ENCODE measurements at regions of chr6 and their contacts with region 1.

Region 1: GRCh38 chr6:132279592-132280139 is 121.6 kb downstream of the MOXD1 start:
- H3K4me3 Mint-ChIP-seq: peak overlapping the region; percentile 78
- H3K27ac Mint-ChIP-seq: no peak overlapping the region
- H3K4me1 Mint-ChIP-seq: no peaks in the 10 kb centered on the region
- H3K27me3 Mint-ChIP-seq: peaks cover 21% of the 10 kb centered on the region

Region 2: DNA sequence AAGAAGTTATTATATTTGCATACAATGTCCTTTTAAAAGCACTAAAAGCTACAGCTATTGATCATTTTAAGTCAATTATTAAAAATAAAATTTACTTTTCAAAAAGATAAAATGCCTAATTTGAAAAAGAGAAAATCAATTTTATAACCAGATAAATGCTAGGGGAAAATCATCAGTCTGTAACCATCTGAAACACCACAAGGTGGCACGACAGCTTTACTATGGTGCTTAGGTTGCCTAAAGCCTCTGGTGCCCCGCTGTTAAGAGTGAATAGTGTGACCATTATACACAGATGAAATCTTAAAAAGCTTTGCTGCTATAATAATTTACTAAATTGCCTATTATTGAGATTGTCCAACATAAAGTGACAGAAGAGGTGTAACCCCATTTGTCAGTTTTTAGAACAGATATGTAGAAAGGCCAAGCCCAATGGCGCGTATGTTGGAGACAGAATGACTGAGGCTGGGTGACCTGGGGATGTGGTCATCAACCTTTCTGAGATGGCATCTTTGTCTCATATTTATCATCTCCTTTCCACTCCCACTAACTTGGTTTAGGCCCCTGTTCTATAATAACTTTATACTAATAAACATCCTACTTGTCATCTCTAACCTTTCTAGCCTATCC is 20.8 kb after region 1 on chr6:
- intact Hi-C with region 1: loop called (anchors 1 kb)
- H3K4me3 Mint-ChIP-seq: no peak overlapping the region
- H3K27ac Mint-ChIP-seq: no peak overlapping the region
- H3K4me1 Mint-ChIP-seq: peaks cover 6% of the 10 kb centered on the region
- H3K27me3 Mint-ChIP-seq: peaks cover 3% of the 10 kb centered on the region

Region 3: DNA sequence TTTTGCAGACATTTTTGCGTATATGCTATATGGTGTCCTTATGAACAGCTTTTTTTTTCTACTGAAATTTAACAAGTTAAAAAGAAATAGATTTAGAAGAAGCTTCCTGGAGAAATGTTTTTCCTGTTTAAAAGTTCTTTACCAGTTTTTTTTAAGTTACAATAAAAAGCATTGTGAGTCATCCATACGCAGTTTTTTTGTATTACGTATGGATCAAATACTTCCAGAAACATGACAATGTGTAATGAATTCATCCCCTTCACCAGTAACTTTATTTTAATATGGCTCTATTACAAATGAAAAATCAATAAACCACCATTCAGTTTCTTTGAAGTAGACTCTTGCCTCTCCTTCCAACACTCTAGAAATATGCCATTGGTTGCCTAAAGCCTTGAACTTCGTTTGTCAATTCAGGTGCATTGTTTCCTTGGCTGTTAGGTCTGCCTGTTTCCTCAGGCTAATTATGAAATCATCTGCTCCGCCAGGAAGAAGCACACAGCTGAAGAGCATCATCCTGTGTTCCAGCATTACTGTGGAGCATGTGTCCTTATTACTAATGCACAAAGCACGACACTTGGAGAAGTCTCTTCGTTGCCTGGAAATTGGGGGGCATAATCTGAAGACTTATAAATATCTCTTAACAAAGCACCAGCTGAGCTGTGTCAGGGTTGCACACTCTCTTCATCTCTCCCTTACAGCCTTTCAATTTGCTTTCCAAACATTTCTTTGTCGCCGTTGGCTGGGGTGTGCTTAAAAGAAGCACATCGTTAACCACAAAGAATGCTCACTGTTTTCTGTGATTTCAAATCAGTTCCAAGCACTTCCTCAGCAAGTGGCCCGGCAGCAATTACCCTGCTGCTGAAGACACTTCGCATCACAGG is 112.0 kb after region 1 on chr6:
- intact Hi-C with region 1: loop called (anchors 2 kb)
- H3K4me3 Mint-ChIP-seq: no peak overlapping the region
- H3K27ac Mint-ChIP-seq: no peak overlapping the region
- H3K4me1 Mint-ChIP-seq: no peaks in the 10 kb centered on the region
- H3K27me3 Mint-ChIP-seq: peaks cover 20% of the 10 kb centered on the region

Region 4: DNA sequence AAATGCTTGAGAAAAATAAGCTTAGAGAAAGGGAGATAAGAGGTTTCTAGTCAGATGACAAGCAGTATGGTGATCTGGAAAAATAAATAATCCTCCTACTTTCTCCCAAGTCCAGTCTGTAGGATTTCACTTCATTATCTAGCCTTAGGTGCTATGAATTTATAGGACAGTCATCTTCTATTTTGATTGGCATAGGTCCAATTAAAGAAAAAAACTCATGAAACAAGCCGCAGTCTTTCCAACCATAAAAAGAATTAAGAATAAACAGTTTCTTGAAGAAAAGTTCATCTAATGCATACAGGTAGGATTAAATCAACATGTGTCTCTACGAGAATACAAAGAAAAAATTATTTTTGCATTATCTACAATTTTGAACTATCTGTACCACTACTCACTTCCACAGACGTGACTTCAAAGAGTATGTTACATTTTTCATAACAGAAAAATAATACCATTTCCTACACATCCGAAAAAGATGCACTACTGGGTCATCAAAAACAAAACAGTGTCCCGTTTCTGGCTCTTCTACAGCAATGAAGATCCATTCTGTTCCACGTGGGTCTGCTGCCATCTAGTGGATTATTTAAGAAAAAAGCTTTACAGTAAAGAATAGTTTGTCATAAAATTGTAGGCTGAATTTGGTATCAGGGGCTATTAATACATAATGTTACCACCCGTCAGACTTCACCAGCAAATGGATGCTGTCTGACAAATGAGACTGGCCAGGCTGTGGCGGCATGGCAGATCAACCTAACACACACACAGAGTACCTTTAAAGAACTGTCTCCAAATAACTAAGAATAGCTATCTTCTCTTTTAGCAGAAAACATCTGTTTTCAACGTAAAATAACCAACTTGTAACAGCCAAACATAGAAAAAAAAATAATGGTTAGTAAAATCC is 204.4 kb after region 1 on chr6:
- intact Hi-C with region 1: loop called (anchors 1 kb)
- H3K4me3 Mint-ChIP-seq: no peak overlapping the region
- H3K27ac Mint-ChIP-seq: no peak overlapping the region
- H3K4me1 Mint-ChIP-seq: peaks cover 24% of the 10 kb centered on the region
- H3K27me3 Mint-ChIP-seq: no peaks in the 10 kb centered on the region

Region 5: DNA sequence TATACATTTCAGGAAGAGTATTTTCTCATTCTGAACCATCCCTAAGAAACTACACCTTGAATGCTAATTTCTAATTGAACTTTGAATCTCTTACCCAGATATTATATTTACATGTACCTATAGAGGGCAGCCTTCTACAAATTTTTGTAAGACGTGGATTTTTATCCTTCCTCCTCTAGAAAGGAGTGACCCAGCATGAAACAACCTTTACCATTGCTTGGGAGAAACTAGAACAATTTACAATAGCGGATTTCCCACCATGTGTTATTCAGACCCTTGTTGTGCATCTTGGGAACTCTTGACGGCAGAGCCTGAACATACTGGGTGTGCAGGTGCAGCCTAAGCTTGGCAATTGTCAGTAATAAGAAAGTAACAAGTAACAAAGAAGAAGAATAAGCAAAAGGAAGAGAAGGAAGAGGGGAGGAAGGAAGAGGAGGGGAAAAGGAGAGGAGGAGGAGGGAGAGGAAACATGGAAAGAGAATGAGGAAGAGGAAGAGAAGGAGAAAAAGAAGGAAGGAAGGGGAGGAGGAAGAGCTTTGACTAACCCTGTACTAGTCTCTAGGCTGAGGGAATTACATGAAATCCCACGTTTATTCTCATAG is 390.1 kb after region 1 on chr6:
- intact Hi-C with region 1: loop called (anchors 10 kb)
- H3K4me3 Mint-ChIP-seq: no peak overlapping the region
- H3K27ac Mint-ChIP-seq: peak overlapping the region; percentile 60
- H3K4me1 Mint-ChIP-seq: peaks cover 10% of the 10 kb centered on the region
- H3K27me3 Mint-ChIP-seq: no peaks in the 10 kb centered on the region

Region 6: GRCh38 chr6:132798869-132799538 is 519.3 kb after region 1 on chr6:
- intact Hi-C with region 1: loop called (anchors 10 kb)
- H3K4me3 Mint-ChIP-seq: peak overlapping the region; percentile 79
- H3K27ac Mint-ChIP-seq: peak overlapping the region; percentile 60
- H3K4me1 Mint-ChIP-seq: peaks cover 5% of the 10 kb centered on the region
- H3K27me3 Mint-ChIP-seq: no peaks in the 10 kb centered on the region